Activated T-helper 1 cell treated with anti-CD3 and anti-CD28 coated beads, Interleukin-12 subunit alpha, Interleukin-12 subunit beta, Interleukin-2, Interleukin-4 antibody, amounts not matched to agents 30 ng/mL and 10 ng/mL and 1 ng/mL, durations not matched to agents 14 hours and 24 hours and 36 hours (primary cell): ENCODE measurements at regions of chrX and their contacts with region 1.

Region 1: DNA sequence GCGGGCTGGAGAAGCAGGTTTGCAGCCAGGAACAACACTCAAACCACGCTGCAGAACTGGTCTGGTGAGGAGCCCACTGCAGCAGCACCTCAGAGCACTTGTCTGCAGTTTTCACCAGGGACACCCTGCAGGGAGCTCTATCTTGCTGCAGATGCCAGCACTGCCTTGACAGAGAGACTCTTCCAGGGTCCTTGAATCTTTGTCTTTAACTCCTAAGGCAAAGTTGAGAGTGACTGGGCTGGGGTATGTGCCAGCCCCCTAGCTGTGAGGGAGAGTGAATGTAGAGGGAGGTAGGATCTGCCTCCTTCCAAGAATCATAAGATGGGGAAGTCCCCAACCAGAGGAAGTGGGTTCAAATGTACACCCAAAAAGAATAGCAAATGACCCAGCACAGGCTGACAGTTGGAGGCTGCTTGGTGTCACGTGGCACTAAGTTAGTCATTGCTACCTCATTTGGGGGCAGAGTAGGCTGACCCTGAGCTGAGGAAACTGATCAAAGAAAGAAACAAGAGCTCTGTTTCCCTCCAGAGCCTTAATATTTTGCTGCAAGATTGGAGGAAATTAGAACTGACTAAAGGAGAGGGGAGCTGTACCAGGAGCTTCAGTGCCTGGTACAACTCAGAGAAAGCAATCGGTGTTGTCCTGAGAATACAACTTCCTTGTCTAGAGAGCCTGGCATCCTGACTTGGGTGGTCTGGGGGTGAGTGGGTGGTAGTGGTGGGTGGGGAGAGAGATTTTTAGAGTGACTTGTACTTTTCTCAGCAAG is 28.2 kb upstream of the HUWE1 start:
- DNase-seq: peak; percentile 70
- H3K4me3 Mint-ChIP-seq: peak overlapping the region; percentile 88
- H3K27ac Mint-ChIP-seq: peak overlapping the region; percentile 99
- H3K4me1 Mint-ChIP-seq: peaks cover 52% of the 10 kb centered on the region
- H3K27me3 Mint-ChIP-seq: no peaks in the 10 kb centered on the region

Region 2: DNA sequence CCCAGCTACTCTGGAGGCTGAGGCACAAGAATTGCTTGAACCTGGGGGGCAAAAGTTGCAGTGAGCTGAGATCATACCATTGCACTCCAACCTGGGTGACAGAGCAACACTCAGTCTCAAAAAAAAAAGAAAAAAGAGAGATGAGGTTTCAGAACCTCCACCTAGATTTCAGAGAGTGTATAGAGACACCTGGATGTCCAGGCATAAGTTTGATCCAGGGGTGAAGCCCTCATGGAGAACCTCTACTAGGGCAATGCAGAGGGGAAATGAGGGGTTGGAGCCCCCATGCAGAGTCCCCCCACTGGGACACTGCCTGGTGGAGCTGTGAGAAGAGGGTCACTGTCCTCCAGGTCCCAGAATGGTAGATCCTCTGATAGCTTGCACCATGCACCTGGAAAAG is 187.8 kb before region 1 on chrX:
- intact Hi-C with region 1: no loop called
- DNase-seq: no peak
- H3K4me3 Mint-ChIP-seq: no peak overlapping the region
- H3K27ac Mint-ChIP-seq: no peak overlapping the region
- H3K4me1 Mint-ChIP-seq: no peaks in the 10 kb centered on the region
- H3K27me3 Mint-ChIP-seq: peaks cover 4% of the 10 kb centered on the region

Region 3: GRCh38 chrX:53616946-53617345 is 97.8 kb before region 1 on chrX:
- intact Hi-C with region 1: no loop called
- DNase-seq: no peak
- H3K4me3 Mint-ChIP-seq: no peak overlapping the region
- H3K27ac Mint-ChIP-seq: no peak overlapping the region
- H3K4me1 Mint-ChIP-seq: peaks cover 7% of the 10 kb centered on the region
- H3K27me3 Mint-ChIP-seq: no peaks in the 10 kb centered on the region

Region 4: GRCh38 chrX:53732797-53733196 is 18.0 kb after region 1 on chrX:
- intact Hi-C with region 1: loop called (anchors 1 kb)
- DNase-seq: no peak
- H3K4me3 Mint-ChIP-seq: peak overlapping the region; percentile 68
- H3K27ac Mint-ChIP-seq: peak overlapping the region; percentile 88
- H3K4me1 Mint-ChIP-seq: peaks cover 33% of the 10 kb centered on the region
- H3K27me3 Mint-ChIP-seq: no peaks in the 10 kb centered on the region

Region 5: DNA sequence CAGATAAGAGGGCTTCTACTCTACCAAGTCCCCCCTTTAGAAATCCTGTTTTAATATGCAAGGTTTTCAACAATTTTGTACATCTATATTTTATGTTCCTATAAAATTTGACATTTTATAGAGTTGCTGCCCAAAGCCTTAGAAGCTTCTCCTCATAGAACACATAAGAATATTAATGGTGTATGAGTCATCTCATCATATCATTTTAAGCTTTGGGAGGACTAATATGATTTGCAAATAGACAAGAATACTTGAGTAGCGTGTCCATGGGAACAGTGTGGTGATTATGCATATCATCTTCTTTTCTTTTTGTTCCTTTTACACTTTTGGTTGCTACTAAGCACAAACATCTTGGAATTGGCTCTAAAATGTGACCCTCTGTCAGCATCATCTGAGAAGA is 28.5 kb after region 1 on chrX:
- intact Hi-C with region 1: loop called (anchors 1 kb)
- DNase-seq: no peak
- H3K4me3 Mint-ChIP-seq: no peak overlapping the region
- H3K27ac Mint-ChIP-seq: no peak overlapping the region
- H3K4me1 Mint-ChIP-seq: peaks cover 17% of the 10 kb centered on the region
- H3K27me3 Mint-ChIP-seq: no peaks in the 10 kb centered on the region